WTC11 (cell line): ENCODE measurements at regions of chr2 and their contacts with region 1.

Region 1: DNA sequence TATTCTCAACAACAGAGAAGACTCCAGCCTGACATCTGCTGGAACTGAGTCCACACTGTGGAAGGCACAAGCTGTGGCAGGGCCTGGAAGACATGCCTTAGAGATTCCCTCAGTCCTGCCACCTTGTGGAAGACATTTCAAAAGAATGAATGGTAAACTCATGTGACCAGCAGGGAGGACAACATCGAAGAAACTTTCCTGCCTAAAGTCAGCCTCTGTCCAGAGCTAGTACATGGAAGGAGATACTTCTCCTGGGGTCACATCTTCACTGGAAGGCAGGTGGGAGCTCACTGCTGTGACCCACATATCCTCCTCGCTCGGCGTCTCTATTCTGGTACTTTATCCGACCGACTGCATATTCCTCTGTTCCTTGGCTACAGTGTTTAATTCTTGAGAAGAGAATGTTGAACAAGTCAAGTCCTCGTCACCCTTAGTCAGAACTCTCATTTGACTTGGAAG is 59.5 kb downstream of the PUM2 start:
- DNase-seq: peak; percentile 62
- ATAC-seq: peak; percentile 99
- H3K4me3 Mint-ChIP-seq: no peak overlapping the region
- H3K27ac Mint-ChIP-seq: peak overlapping the region; percentile 88
- H3K4me1 Mint-ChIP-seq: peaks cover 7% of the 10 kb centered on the region
- H3K27me3 Mint-ChIP-seq: no peaks in the 10 kb centered on the region
- CTCF ChIP-seq: peak; percentile 28

Region 2: GRCh38 chr2:20106746-20107145 is 184.4 kb before region 1 on chr2:
- CTCF ChIA-PET with region 1: interaction called, 13 read pairs
- POLR2A ChIA-PET with region 1: no interaction called
- DNase-seq: peak; percentile 91
- ATAC-seq: peak; percentile 92
- H3K4me3 Mint-ChIP-seq: peak overlapping the region; percentile 64
- H3K27ac Mint-ChIP-seq: no peak overlapping the region
- H3K4me1 Mint-ChIP-seq: peaks cover 7% of the 10 kb centered on the region
- H3K27me3 Mint-ChIP-seq: peaks cover 43% of the 10 kb centered on the region
- CTCF ChIP-seq: peak; percentile 55

Region 3: GRCh38 chr2:20231632-20232031 is 59.5 kb before region 1 on chr2:
- CTCF ChIA-PET with region 1: interaction called, 21 read pairs
- POLR2A ChIA-PET with region 1: no interaction called
- DNase-seq: peak; percentile 37
- ATAC-seq: peak; percentile 90
- H3K4me3 Mint-ChIP-seq: no peak overlapping the region
- H3K27ac Mint-ChIP-seq: no peak overlapping the region
- H3K4me1 Mint-ChIP-seq: peaks cover 20% of the 10 kb centered on the region
- H3K27me3 Mint-ChIP-seq: peaks cover 7% of the 10 kb centered on the region; the same call in 1 of the 2 replicates
- CTCF ChIP-seq: no peak

Region 4: DNA sequence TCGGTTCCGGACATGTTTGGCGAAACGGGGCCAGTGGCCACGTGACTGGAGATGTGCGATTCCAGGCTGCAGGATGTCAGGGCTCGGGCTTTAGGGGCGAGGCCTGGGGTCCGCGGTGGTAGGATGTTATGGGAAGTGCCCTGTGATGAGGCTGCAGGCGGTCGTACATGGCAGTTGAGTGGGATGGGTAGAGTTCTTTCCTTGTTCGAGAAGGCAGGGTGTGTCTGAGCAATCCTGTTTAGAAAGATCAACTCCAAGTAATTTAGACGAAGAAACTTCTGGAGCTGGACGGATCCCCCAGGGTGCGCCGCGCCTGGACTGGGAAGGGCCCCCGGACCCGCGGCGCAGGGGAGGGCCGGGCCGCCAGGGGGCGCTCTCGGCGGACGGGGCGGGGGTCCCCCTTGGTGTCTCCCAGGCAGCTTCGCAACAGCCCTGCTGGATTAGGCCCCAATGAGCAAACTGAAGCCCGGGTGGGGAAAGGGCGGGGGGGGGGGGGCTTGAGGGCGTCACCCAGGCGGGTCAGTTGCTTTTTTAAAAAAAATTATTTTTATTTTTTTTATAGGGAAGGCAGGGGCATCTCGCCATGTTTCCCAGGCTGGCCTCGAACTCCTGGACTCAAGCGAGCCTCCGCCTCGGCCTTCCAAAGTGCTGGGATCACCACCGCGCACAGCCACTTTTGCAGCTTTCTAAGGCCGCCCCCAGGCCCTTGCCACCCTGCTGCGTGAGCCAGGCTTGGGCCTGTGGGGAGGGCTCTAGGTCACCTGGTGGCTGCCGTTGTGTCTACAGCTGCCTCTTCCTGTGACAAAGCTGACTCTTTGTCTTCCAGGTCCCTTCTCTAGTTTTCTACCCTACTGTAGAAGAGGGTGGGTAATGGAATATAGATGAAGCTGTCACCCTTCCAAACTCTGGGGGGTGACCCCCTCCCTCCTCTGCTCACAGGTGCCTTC is 48.8 kb before region 1 on chr2:
- CTCF ChIA-PET with region 1: interaction called, 17 read pairs
- POLR2A ChIA-PET with region 1: no interaction called
- DNase-seq: peak; percentile 74
- ATAC-seq: peak; percentile 73
- H3K4me3 Mint-ChIP-seq: peak overlapping the region; percentile 31
- H3K27ac Mint-ChIP-seq: no peak overlapping the region
- H3K4me1 Mint-ChIP-seq: peaks cover 14% of the 10 kb centered on the region
- H3K27me3 Mint-ChIP-seq: no peaks in the 10 kb centered on the region; the same call in 1 of the 2 replicates
- CTCF ChIP-seq: peak; percentile 93

Region 5: DNA sequence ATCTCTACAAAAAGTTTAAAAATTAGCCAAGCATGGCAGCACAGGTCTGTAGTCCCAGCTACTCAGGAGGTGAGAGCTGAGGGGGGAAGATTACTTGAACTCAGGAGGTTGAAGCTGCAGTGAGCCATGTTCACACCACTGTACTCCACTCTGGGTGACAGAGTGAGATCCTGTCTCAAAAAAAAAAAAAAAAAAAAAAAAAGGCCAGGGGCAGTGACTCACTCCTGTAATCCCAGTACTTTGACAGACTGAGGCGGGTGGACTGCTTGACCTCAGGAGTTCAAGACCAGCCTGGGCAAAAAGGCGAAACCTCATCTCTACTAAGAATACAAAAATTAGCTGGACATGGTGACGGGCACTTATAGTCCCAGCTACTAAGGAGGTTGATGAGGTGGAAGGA is 22.5 kb after region 1 on chr2:
- CTCF ChIA-PET with region 1: interaction called, 24 read pairs
- POLR2A ChIA-PET with region 1: no interaction called
- DNase-seq: no peak
- ATAC-seq: no peak
- H3K4me3 Mint-ChIP-seq: no peak overlapping the region
- H3K27ac Mint-ChIP-seq: 0 out of 2 replicates have a peak overlapping the region, but pooled peaks have one; percentile 88
- H3K4me1 Mint-ChIP-seq: peaks cover 28% of the 10 kb centered on the region
- H3K27me3 Mint-ChIP-seq: no peaks in the 10 kb centered on the region
- CTCF ChIP-seq: no peak

Region 6: GRCh38 chr2:20326163-20326780 is 35.1 kb after region 1 on chr2:
- CTCF ChIA-PET with region 1: interaction called, 14 read pairs
- POLR2A ChIA-PET with region 1: no interaction called
- DNase-seq: peak; percentile 36
- ATAC-seq: peak; percentile 92
- H3K4me3 Mint-ChIP-seq: no peak overlapping the region
- H3K27ac Mint-ChIP-seq: no peak overlapping the region
- H3K4me1 Mint-ChIP-seq: peaks cover 62% of the 10 kb centered on the region
- H3K27me3 Mint-ChIP-seq: no peaks in the 10 kb centered on the region
- CTCF ChIP-seq: peak; percentile 50